Tibial artery (tissue), 4 donors: ENCODE measurements at regions of chr6 and their contacts with region 1.

Region 1: GRCh38 chr6:37018198-37019064 is 13.0 kb downstream of the FGD2 start:
- DNase-seq: peak; percentile 90 to 93
- H3K4me3 ChIP-seq: no peak overlapping the region
- H3K27ac ChIP-seq: peak overlapping the region in 1 of 2 donors; percentile 64
- H3K4me1 ChIP-seq: peaks cover 0 to 13% (median 6%) of the 10 kb centered on the region in 4 donors
- H3K27me3 ChIP-seq: no peaks in the 10 kb centered on the region
- CTCF ChIP-seq: peak; percentile 82 to 88

Region 2: DNA sequence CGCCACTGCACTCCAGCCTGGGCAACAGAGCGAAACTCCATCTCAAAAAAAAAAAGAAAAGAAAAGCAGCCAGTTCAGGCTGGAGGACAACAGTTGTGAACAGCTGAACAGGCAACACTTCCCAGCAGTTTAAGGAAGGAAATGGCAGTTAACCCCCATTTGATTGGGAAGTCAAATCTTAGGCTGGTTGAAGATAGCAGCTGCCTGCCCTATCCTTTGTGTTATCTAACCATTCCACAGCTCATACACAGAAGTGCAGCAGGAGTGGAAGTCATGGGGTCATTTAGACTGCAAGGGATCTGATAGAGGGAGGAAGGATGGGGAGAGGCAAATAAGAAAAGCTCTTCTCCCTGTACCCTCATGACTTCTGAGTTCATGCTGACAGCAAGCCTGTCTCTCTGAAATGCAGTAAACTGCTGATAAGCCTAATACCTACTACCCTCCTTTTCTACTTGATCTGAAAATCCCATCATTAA is 540.3 kb before region 1 on chr6:
- intact Hi-C with region 1: no loop called
- DNase-seq: no peak
- H3K4me3 ChIP-seq: no peak overlapping the region
- H3K27ac ChIP-seq: no peak overlapping the region
- H3K4me1 ChIP-seq: no peaks in the 10 kb centered on the region
- H3K27me3 ChIP-seq: no peaks in the 10 kb centered on the region
- CTCF ChIP-seq: no peak

Region 3: DNA sequence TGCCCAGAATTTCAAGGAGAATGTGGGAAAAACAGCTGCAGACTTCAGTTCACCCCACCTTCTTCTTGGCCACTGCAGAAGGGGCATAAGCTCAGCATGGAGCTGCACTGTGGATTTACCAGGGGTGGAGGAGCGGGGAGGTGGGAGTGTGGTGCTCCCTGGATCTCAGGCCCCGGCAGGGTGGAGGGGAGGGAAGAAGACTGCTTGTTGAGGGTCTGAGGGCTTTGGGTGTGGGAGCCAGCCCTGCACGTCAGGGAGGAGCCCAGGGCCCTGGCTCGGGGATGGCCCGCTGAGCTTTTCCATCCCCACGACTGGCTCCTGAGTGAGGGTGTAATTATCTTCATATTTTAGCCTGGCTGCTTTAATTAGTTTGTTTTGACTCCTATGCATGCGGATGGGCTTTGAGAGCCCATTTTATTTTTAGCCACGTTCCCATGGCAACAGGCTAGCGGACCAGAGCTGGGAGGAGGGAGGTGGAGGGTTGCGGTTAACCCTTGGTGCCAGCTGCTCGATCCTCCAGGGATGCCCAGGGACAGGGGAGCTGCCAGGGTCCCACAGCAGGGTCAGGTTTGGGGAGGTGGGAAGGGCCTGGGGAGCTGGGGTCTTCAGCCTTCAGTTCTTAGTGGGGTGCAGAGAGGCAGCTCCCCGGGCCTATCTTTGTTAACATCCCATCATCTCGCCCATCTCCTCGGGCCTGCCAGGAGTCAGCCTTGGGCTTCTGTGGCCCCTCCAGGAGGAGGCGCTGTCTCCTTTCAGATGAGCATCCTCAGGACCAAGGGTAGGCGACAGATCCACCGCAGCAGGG is 252.6 kb before region 1 on chr6:
- intact Hi-C with region 1: loop called (anchors 5 kb)
- DNase-seq: peak; percentile 76 to 88
- H3K4me3 ChIP-seq: no peak overlapping the region
- H3K27ac ChIP-seq: no peak overlapping the region
- H3K4me1 ChIP-seq: peaks cover 0 to 14% (median 10%) of the 10 kb centered on the region in 4 donors
- H3K27me3 ChIP-seq: no peaks in the 10 kb centered on the region
- CTCF ChIP-seq: peak; percentile 77 to 90

Region 4: DNA sequence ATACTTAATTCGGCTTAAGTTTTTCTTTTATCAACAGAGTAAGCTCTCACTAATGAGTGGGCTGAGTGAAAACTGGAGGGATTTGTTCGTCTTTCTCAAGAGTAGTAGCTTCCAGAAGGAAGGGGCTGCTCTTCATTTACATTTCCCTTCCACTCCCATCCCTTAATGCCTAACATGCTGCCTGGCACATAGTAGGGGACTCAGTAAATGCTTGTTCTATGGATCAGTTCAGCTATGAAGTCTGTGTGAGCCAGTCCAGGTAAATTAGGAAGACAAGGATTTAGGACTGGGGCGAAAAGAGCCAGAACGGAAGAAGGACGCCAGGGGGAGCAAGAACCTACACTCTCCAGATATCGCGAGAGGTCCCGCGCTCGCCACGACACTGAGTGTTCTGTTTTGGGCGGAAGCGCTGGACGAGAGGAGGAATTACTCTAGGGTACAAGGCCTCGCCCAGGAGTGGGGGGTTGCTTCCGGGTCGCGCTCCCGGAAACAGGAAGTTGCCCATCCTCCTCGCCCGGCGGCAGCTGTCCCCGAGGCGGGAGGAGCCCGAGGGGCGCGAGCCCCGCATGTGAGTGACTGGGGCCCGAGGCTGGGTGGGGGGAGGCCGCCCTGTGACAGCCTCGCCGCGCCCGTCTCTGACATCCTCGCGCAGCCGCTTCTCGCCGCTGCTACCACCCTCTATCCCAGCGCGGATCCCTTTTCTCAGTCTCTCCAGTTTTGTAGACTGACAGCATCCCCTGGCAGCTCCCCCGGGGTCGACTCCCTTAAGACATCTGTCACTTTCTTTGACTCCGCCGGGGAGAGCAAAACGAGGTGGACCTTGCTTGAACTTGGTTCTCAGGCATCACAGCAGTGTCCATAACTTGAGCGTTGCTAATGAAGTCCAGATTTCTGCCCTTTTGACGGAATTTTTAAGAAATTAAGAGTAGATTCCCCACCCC is 132.7 kb before region 1 on chr6 and contains the start of gene C6orf89:
- intact Hi-C with region 1: loop called (anchors 10 kb)
- DNase-seq: peak; percentile 98 to 99
- H3K4me3 ChIP-seq: peak within 1 kb of the TSS; percentile 75 to 77
- H3K27ac ChIP-seq: peak within 1 kb of the TSS; percentile 86 to 89
- H3K4me1 ChIP-seq: peaks cover 0 to 25% (median 17%) of the 10 kb centered on the region in 4 donors
- H3K27me3 ChIP-seq: no peaks in the 10 kb centered on the region
- CTCF ChIP-seq: peak; percentile 86 to 95

Region 5: DNA sequence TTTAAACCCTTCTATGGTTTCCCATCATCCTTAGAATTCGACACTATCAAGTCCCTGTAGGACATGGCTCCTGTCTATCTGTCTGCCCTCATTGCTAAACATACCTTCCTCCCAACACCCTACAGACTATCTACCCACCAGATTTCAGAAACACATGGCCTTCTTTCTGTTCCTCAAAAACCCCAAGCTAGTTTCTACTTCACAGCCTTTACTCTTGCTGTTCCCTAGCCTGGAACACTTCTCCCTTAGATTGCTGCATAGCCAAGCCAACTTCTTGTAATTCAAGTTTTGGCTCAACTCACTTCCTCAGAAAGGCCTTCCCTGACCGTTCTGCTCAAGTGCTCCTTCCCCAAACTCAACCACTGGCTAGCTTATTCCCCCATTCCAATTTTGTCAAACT is 1465.1 kb after region 1 on chr6:
- intact Hi-C with region 1: no loop called
- DNase-seq: no peak
- H3K4me3 ChIP-seq: no peak overlapping the region
- H3K27ac ChIP-seq: no peak overlapping the region
- H3K4me1 ChIP-seq: peaks cover 0 to 5% (median 0%) of the 10 kb centered on the region in 4 donors
- H3K27me3 ChIP-seq: no peaks in the 10 kb centered on the region
- CTCF ChIP-seq: no peak